ENCODE measurements at regions of chr15 and their contacts with region 1.

Region 1: DNA sequence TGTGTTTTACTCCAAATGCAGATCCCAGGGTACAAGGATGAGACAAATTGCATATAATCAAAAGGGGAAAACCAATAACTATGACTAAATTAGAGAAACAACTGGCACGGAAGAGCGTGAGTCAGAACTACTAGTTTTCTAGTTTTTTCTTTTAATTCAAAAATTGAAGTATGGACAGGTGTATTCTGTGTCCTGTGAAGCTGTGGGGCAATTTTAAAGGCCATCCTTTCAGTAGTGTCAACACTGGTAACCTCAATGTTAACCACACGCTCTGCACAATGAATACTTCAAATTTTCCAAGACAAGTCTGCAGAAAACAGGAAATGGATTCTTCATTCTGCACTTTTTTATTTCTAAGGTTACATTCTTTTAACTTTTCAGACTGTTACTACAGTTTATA is 32.5 kb upstream of the GOLGA8A start:
- DNase-seq: no peak
- ATAC-seq: no peak
- H3K4me3 ChIP-seq: no peak overlapping the region
- H3K27ac ChIP-seq: no peak overlapping the region
- H3K4me1 ChIP-seq: no peaks in the 10 kb centered on the region
- H3K27me3 ChIP-seq: peaks cover 11% of the 10 kb centered on the region; the same call in 1 of the 2 replicates
- CTCF ChIP-seq: no peak
- POLR2A ChIP-seq: no peak
- RAD21 ChIP-seq: no peak

Region 2: DNA sequence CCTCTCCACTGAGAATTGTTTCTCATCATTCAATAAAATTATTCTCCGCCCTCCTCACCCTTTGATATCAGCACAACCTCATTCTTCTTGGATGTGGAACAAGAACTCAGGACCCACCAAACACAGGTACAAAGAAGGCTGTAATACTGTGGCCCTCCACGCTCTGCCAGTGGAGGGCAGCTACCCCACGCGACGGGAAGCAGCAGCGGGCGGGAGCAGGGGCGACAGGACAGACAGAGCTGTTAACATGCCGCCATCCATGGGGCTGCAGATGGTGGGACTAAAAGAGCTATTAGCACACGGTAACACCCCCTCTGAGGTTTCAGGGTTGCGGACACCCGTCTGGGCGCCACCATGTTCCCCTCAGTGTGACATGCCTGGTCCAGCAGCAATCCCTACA is 207.7 kb before region 1 on chr15:
- CTCF ChIA-PET with region 1: no interaction called
- POLR2A ChIA-PET with region 1: no interaction called
- RAD21 ChIA-PET with region 1: no interaction called
- intact Hi-C with region 1: loop called (anchors 10 kb)
- DNase-seq: no peak
- ATAC-seq: no peak
- H3K4me3 ChIP-seq: no peak overlapping the region
- H3K27ac ChIP-seq: no peak overlapping the region
- H3K4me1 ChIP-seq: no peaks in the 10 kb centered on the region
- H3K27me3 ChIP-seq: no peaks in the 10 kb centered on the region
- CTCF ChIP-seq: no peak
- POLR2A ChIP-seq: no peak
- RAD21 ChIP-seq: no peak

Region 3: DNA sequence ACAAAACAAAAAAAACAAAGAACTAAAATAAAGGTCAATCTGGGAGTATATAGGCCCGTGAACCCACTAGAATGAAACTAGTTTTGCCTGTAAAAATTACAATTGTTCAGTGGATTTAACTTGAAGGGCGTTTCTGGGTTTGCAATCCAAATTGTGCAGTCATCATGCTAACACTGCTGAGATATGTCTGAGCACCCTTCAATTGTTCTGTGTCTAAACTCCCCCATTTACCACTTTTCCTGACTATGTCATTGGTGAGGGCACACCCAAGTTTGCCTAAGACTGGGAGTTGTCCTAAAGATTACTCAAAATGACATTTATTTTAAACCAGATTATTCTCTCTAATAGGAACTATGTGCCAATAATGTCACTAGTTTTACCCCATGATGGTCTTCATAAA is 190.8 kb before region 1 on chr15:
- CTCF ChIA-PET with region 1: no interaction called
- POLR2A ChIA-PET with region 1: no interaction called
- RAD21 ChIA-PET with region 1: no interaction called
- intact Hi-C with region 1: no loop called
- DNase-seq: no peak
- ATAC-seq: no peak
- H3K4me3 ChIP-seq: no peak overlapping the region
- H3K27ac ChIP-seq: no peak overlapping the region
- H3K4me1 ChIP-seq: no peaks in the 10 kb centered on the region
- H3K27me3 ChIP-seq: no peaks in the 10 kb centered on the region
- CTCF ChIP-seq: no peak
- POLR2A ChIP-seq: no peak
- RAD21 ChIP-seq: no peak

Region 4: GRCh38 chr15:34493001-34493400 is 22.9 kb after region 1 on chr15:
- CTCF ChIA-PET with region 1: no interaction called
- POLR2A ChIA-PET with region 1: no interaction called
- RAD21 ChIA-PET with region 1: no interaction called
- intact Hi-C with region 1: loop called (anchors 2 kb)
- DNase-seq: no peak
- ATAC-seq: no peak
- H3K4me3 ChIP-seq: no peak overlapping the region
- H3K27ac ChIP-seq: no peak overlapping the region
- H3K4me1 ChIP-seq: no peaks in the 10 kb centered on the region
- H3K27me3 ChIP-seq: no peaks in the 10 kb centered on the region; the same call in 1 of the 2 replicates
- CTCF ChIP-seq: no peak
- POLR2A ChIP-seq: no peak
- RAD21 ChIP-seq: no peak